OCI-LY7 (cell line): ENCODE measurements at regions of chr16 and their contacts with region 1.

Region 1: GRCh38 chr16:4330277-4330874 is 14.5 kb downstream of the GLIS2 start:
- DNase-seq: peak; percentile 71
- H3K4me3 ChIP-seq: no peak overlapping the region
- H3K27ac ChIP-seq: no peak overlapping the region
- H3K4me1 ChIP-seq: peaks cover 10% of the 10 kb centered on the region
- CTCF ChIP-seq: peak; percentile 97

Region 2: DNA sequence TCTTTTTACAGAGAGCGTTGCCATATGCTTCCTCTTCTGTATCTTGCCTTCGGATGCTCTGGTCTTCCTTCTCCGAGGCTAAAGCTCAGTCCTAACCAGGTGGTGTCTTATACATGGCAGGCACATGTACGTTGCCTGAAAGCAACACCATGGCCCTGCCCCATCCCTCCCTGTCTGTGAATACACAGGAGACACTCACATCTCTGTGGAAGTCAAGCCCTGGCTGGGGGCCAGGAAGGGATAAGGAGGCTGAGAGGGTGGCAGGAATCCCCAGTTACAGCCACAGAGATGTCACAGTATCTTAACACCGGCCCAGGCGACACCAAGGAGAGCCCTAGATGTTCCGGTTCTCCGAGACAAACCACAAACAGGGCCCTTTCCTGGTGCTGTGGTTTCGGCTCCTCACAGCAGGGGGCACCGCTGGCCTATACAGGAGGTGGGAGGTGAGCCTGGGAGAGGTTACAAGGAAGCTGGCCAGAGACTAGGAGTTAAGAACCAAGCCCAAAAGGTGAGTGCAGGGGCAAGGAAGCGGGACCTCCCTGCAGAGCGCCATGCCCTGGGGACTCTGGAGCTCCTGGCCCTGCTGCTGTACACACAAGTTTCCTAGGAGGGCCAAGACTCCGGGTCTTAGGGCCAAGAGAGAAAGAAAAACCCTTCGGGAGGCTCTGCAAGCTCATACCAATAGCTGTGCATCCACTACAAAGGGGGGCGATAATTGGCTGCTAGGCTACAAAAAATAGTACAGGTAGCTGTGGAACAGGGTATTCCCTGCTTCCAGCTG is 130.2 kb before region 1 on chr16:
- CTCF ChIA-PET with region 1: no interaction called
- POLR2A ChIA-PET with region 1: no interaction called
- intact Hi-C with region 1: loop called (anchors 1 kb)
- DNase-seq: peak; percentile 56
- H3K4me3 ChIP-seq: no peak overlapping the region
- H3K27ac ChIP-seq: no peak overlapping the region
- H3K4me1 ChIP-seq: no peaks in the 10 kb centered on the region
- CTCF ChIP-seq: peak; percentile 79

Region 3: GRCh38 chr16:4288148-4288921 is 42.0 kb before region 1 on chr16:
- CTCF ChIA-PET with region 1: no interaction called
- POLR2A ChIA-PET with region 1: interaction called, 5 read pairs
- intact Hi-C with region 1: loop called (anchors 1 kb)
- DNase-seq: peak; percentile 79
- H3K4me3 ChIP-seq: no peak overlapping the region
- H3K27ac ChIP-seq: no peak overlapping the region
- H3K4me1 ChIP-seq: peaks cover 5% of the 10 kb centered on the region
- CTCF ChIP-seq: peak; percentile 99

Region 4: GRCh38 chr16:4313898-4314531 is 16.4 kb before region 1 on chr16:
- CTCF ChIA-PET with region 1: interaction called, 5 read pairs
- POLR2A ChIA-PET with region 1: no interaction called
- intact Hi-C with region 1: loop called (anchors 1 kb)
- DNase-seq: peak; percentile 40
- H3K4me3 ChIP-seq: no peak overlapping the region
- H3K27ac ChIP-seq: no peak overlapping the region
- H3K4me1 ChIP-seq: peaks cover 20% of the 10 kb centered on the region
- CTCF ChIP-seq: peak; percentile 85